Activated CD4-positive, alpha-beta T cell treated with anti-CD3 and anti-CD28 coated beads for 36 hours (primary cell): ENCODE measurements at regions of chr22 and their contacts with region 1.

Region 1: DNA sequence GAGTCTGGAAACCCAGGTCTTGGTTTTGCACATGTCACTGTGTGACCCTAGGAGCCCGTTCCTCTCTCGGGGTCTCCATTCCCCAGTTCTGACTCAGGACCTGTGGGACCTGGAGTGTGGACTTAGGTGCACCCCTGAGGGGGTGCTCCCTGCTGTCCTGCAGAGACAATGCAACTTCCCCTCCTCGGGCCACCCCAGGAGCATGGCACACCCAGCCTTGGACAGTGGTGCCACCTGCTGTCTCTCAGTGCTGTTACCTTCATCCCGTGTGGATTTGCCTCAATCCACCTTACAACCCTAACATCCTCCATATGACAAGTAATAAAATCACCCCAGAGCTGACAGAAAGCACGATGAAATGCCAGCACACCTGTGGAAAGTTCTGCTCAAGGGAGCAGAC is 27.5 kb upstream of the CRYBB3 start:
- DNase-seq: peak; percentile 71
- ATAC-seq: peak; percentile 83
- H3K4me3 Mint-ChIP-seq: no peak overlapping the region
- H3K27ac Mint-ChIP-seq: no peak overlapping the region
- H3K4me1 Mint-ChIP-seq: no peaks in the 10 kb centered on the region
- H3K27me3 Mint-ChIP-seq: no peaks in the 10 kb centered on the region

Region 2: DNA sequence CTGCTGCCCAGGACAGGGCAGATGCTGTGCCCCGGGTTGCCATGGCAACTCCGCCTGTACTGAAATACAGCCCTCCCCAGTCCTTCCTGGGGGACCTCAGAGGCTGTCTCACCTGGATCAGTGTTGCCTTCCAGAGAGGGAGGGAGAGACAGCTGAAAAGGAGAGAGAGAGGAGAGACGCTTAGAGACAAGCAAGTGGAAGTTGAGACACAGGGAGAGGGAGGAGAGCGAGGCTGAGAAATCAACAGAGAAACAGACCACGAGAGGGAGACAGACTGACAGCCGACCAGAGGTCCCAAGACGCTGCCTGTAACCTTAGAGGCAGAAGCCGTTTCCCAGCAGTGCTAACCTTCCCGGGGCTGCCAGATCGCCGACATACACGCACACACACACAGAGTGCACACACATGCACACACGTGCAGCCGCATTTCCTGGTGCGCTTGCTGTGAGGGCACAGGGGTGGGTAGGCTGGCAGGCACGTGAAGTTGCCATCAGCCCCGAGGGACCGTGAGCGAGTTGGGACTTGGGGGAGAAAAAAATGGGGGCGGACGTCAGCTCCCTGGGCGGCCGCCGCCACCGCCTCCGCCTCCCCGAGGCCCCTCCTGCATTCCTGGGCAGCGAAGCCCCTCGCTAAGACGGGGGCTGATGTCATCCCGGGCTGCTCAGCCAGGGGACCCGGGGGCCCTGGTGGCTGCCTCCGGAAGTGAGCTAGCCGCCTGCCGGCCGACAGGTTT is 61.1 kb before region 1 on chr22:
- CTCF ChIA-PET with region 1: interaction called, 3 read pairs
- POLR2A ChIA-PET with region 1: no interaction called
- intact Hi-C with region 1: loop called in 1 of 2 experiments (anchors 2 kb)
- DNase-seq: peak; percentile 69
- ATAC-seq: peak; percentile 82
- H3K4me3 Mint-ChIP-seq: peak overlapping the region; percentile 64
- H3K27ac Mint-ChIP-seq: peak overlapping the region; percentile 30
- H3K4me1 Mint-ChIP-seq: peaks cover 21% of the 10 kb centered on the region
- H3K27me3 Mint-ChIP-seq: no peaks in the 10 kb centered on the region

Region 3: GRCh38 chr22:25182131-25183110 is 10.3 kb after region 1 on chr22:
- CTCF ChIA-PET with region 1: no interaction called
- POLR2A ChIA-PET with region 1: no interaction called
- intact Hi-C with region 1: loop called in 1 of 2 experiments (anchors 1 kb)
- DNase-seq: no peak
- ATAC-seq: no peak
- H3K4me3 Mint-ChIP-seq: no peak overlapping the region
- H3K27ac Mint-ChIP-seq: no peak overlapping the region
- H3K4me1 Mint-ChIP-seq: no peaks in the 10 kb centered on the region
- H3K27me3 Mint-ChIP-seq: no peaks in the 10 kb centered on the region